Posterior vena cava (tissue), 2 donors: ENCODE measurements at regions of chr20 and their contacts with region 1.

Region 1: GRCh38 chr20:53869466-53870258 is 200.7 kb downstream of the BCAS1 start:
- DNase-seq: no peak

Region 2: DNA sequence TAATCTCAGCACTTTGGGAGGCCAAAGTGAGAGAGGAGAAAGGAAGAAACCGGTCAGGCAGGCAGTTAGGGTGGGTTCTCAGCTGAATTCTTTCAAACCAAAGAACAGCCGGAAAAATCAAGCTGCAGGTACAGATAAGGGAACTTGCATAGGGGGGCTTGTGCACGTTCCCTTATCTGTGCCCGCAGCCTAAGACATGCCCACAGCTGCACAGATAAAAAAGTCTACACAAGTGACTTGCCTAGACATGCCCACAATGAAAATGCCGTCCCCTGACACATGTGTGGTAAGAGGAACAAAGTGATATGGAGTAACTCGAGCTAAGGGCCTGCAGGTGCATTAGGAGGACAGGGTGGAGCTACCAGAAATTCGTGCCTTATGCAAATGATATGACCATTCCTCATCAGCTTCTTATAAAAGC is 1891.6 kb before region 1 on chr20:
- intact Hi-C with region 1: loop called in 1 of 2 experiments (anchors 10 kb)
- DNase-seq: no peak

Region 3: GRCh38 chr20:53061192-53062108 is 808.2 kb before region 1 on chr20:
- intact Hi-C with region 1: no loop called
- DNase-seq: no peak

Region 4: GRCh38 chr20:53736757-53737395 is 132.8 kb before region 1 on chr20:
- intact Hi-C with region 1: no loop called
- DNase-seq: no peak

Region 5: DNA sequence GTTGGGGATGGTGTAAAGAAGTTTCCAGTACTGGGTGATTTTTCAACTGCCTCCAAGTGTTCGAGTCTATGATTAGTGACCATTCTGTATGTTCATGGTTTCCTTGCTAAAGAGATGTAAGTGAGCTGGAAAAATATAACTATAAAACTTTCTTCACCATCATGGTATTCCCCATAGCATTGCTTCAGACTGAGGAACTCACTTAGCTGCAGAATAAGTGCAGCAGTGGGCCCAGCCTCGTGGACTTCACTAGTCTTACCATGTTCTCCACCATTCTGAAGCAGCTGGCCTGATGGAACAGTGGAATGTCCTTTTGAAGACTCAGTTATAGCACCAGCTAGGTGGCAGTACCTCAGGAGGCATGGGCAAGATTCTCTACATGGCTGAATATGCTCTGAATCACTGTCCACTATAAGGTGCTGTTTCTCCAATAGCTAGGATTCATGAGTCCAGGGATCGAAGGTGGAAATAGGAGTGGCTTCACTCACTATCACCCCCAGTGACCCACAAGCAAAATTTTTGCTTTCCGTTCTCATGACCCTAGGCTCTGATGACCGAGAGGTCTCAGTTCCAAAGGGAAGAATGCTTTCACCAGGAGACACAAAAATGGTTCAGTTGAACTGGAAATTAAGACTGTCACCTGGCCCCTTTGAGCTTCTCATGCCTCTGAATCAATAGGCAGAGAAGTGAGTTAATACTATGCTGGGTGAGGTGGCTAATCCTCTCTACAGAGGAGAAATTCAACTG is 947.9 kb after region 1 on chr20:
- intact Hi-C with region 1: no loop called
- DNase-seq: no peak